AG04449 (cell line): ENCODE measurements at regions of chr17 and their contacts with region 1.

Region 1: DNA sequence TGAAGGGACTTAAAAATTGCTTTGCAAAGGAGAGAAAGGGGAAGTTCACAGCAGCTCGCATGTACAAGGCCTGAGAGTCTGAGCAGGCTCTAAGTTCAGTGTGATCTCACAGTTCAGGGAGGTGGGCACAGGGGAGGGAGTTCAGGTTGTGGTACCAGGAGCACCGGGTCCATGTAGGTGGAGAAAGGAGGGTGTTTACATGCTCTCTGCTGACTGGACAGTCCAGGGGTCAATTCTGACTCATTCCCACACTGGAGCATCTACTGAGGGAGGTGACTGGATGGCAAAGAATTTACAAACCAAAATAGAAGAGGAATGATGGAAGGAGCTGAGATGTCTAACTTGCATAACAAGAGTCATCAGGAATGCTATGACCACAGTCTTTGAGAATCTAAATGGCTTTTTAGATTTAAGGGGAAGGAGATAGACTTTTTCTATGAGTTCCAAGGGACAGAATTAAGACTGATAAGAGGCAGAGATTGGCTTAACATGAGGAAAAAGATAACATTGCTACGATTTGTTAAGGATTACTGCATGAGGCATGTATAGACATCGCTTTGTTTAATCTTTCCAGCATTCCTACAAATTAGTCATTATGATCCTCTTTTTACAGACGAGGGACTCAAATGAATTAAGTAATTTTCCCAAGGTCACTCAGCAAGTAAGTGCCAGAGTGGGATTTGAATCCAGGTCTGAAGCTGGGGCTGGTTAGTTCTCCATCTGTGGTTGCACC is 29.9 kb downstream of the MIS12 start:
- DNase-seq: peak; percentile 97
- H3K4me3 ChIP-seq: no peak overlapping the region
- CTCF ChIP-seq: no peak

Region 2: GRCh38 chr17:5486204-5487124 is 29.8 kb before region 1 on chr17 and contains the start of gene MIS12:
- CTCF ChIA-PET with region 1: no interaction called
- POLR2A ChIA-PET with region 1: no interaction called
- DNase-seq: peak; percentile 97
- H3K4me3 ChIP-seq: peak within 1 kb of the TSS; percentile 86
- CTCF ChIP-seq: no peak

Region 3: DNA sequence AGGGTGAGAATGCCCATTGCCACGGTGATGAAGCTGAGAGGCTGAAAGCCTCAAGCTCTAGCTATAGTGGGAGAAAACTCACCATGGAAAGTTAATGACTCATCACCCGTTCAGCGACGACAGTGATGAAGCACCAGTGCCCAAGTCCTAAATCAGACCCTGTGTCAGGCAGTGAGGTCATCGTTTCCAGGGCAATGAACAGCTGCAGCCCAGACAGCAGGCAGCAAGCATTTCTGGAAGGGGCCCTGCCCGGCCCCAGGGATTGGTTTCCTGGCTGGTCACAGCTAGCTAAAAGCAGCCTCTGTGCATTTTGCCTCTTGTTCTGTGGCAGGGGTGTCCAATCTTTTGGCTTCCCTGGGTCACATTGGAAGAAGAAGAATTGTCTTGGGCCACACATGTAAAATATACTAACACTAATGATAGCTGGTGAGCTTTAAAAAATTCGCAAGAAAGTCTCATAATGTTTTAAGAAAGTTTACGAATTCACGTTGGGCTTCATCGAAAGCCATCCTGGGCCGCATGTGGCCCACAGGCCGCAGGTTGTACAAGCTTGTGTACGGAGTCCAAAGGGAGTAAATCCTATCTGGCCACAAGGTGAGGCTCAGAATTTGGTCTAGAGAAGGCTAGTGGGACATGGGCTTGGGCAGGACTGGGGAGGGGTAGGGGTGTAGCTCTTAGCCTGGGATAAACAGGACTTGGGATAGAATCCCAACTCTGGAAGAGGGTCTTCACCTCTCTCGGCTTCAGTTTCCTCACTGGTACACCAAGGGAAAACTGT is 10.8 kb after region 1 on chr17:
- CTCF ChIA-PET with region 1: interaction called, 3 read pairs
- POLR2A ChIA-PET with region 1: interaction called, 10 read pairs
- DNase-seq: peak; percentile 85
- H3K4me3 ChIP-seq: no peak overlapping the region
- CTCF ChIP-seq: no peak

Region 4: GRCh38 chr17:5563456-5563855 is 47.2 kb after region 1 on chr17:
- CTCF ChIA-PET with region 1: no interaction called
- POLR2A ChIA-PET with region 1: no interaction called
- DNase-seq: no peak
- H3K4me3 ChIP-seq: no peak overlapping the region
- CTCF ChIP-seq: no peak